Activated CD4-positive, alpha-beta T cell treated with anti-CD3 and anti-CD28 coated beads, Interleukin-2, amount 10 ng/mL, durations not matched to agents 7 days and 5 days (primary cell): ENCODE measurements at regions of chr11 and their contacts with region 1.

Region 1: GRCh38 chr11:35122308-35122707 is 16.7 kb upstream of the CD44 start:
- DNase-seq: peak; percentile 31
- H3K4me3 Mint-ChIP-seq: no peak overlapping the region
- H3K27ac Mint-ChIP-seq: peak overlapping the region; percentile 38
- H3K4me1 Mint-ChIP-seq: peaks cover 67% of the 10 kb centered on the region
- H3K27me3 Mint-ChIP-seq: peaks cover 10% of the 10 kb centered on the region

Region 2: DNA sequence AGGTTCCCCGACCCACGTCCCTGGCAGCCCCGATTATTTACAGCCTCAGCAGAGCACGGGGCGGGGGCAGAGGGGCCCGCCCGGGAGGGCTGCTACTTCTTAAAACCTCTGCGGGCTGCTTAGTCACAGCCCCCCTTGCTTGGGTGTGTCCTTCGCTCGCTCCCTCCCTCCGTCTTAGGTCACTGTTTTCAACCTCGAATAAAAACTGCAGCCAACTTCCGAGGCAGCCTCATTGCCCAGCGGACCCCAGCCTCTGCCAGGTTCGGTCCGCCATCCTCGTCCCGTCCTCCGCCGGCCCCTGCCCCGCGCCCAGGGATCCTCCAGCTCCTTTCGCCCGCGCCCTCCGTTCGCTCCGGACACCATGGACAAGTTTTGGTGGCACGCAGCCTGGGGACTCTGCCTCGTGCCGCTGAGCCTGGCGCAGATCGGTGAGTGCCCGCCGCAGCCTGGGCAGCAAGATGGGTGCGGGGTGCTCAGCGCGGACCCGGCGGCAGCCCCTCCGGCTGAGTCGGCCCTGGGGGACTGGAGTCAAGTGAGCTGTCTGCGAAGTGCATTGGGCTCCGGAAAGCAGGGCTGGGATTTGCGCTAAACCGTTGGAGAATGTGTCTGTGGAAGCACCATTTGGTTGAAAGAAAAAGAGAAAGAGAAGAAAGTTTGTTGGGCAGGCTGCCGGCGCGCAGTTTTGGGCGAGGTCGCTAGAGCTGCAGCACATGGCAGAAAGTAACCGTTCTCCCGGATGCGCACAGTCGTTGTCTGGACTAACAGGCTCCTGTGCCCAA is 16.8 kb after region 1 on chr11 and contains the start of gene CD44:
- CTCF ChIA-PET with region 1: interaction called, 15 read pairs
- POLR2A ChIA-PET with region 1: no interaction called
- DNase-seq: peak; percentile 76
- H3K4me3 Mint-ChIP-seq: peak within 1 kb of the TSS; percentile 87
- H3K27ac Mint-ChIP-seq: peak within 1 kb of the TSS; percentile 94
- H3K4me1 Mint-ChIP-seq: peaks cover 45% of the 10 kb centered on the region
- H3K27me3 Mint-ChIP-seq: no peaks in the 10 kb centered on the region
- total RNA-seq, gene CD44: 518 to 534 TPM